G401 (cell line): ENCODE measurements at regions of chr16 and their contacts with region 1.

Region 1: DNA sequence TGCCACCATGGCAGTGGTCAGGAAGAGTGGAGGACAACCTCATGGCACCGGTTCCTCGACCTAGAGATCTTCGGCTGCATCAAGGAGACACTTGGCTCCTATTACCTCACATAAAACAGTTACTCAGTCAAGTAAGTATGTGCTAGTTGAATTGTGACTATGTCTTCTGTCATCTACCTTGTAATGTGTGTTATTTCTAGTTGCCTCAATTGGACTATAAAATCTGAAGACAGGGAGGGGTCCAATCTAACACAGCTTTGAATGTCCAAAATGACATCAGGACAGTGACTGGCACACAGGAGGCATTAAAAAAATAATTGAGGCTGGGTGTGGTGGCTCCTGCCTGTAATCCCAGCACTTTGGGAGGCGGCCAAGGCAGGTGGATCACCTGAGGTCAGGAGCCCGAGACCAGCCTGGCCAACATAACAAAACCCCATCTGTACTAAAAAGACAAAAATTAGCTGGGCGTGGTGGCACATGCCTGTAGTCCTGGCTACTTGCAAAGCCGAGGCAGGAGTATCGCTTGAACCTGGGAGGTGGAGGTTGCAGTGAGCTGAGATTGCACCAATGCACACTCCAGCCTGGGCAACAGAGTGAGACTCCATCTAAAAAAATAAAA is 17.3 kb downstream of the C16orf86 start:
- DNase-seq: no peak

Region 2: DNA sequence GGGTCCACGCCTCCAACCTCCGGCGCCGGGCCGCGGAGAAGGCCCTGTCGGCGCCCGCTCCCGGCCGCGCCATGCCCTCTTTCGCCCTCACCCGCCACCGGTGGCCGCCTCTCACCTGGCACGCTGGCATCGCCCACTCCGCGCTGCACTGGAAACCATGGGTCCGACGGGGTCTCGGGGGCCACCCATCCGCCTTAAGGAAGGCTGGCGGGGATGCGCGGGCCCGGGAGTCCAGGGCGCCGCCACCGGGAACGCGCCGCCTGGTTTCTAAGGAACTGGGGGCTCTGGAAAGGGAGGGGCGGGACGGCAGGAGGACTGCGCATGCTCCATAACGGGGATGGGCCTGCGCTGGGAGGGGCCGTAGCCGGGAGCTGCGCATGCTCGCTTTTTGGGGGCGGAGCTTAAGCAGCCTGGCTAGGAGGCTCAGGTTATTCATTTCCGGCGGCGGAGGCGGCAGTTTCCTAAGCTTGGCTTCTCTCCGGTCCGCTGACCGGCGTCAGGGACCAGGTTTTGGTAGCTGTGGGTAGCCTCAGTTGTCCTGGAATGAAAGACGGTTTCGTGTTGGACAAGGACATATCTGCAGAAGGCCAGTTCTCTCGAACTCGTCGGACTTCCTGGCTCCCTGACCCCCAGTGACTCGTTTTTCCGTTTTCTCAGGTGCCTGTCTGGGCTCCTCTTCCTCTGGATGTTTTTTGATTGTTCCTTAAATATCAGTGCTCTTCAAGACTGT is 35.3 kb after region 1 on chr16 and contains the start of gene GFOD2:
- in situ Hi-C with region 1: loop called (anchors 5 kb)
- DNase-seq: peak; percentile 97
- total RNA-seq, gene GFOD2: 26.2 TPM in 2 replicates